CD8-positive, alpha-beta T cell (primary cell): ENCODE measurements at regions of chrX and their contacts with region 1.

Region 1: DNA sequence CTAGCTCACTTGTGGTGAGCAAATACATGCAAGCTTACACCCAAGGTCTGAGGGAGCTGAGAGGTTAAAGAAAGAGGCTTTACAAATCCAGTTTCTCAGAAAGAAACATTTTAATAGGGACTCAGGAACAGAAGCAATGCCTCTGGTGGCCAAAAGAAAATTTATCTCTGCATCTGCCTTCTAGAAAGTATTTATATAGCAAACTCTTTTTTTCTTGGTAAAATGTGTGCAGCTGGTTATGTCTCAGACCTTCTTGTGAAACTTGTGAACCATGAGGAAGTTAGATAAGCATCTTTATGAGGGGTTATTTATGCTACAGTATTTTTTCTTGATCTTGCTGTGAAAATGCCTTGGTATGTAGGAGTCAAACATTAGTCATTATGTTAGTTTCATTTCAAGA is 48.5 kb upstream of the CYSLTR1 start:
- DNase-seq: peak in 2 of 9 experiments; percentile 6 to 21
- ATAC-seq: peak; percentile 36
- H3K4me3 ChIP-seq: no peak overlapping the region
- H3K4me3 Mint-ChIP-seq: no peak overlapping the region
- H3K27ac ChIP-seq: no peak overlapping the region
- H3K27ac Mint-ChIP-seq: peak overlapping the region; percentile 27
- H3K4me1 ChIP-seq: no peaks in the 10 kb centered on the region
- H3K4me1 Mint-ChIP-seq: peaks cover 6% of the 10 kb centered on the region
- H3K27me3 ChIP-seq: no peaks in the 10 kb centered on the region
- H3K27me3 Mint-ChIP-seq: no peaks in the 10 kb centered on the region
- CTCF ChIP-seq: no peak

Region 2: GRCh38 chrX:78333521-78333920 is 42.4 kb before region 1 on chrX:
- CTCF ChIA-PET with region 1: no interaction called
- POLR2A ChIA-PET with region 1: no interaction called
- intact Hi-C with region 1: loop called in 1 of 2 experiments (anchors 5 kb)
- DNase-seq: peak in 2 of 9 experiments; percentile 54 to 74
- ATAC-seq: peak; percentile 82
- H3K4me3 ChIP-seq: no peak overlapping the region
- H3K4me3 Mint-ChIP-seq: no peak overlapping the region
- H3K27ac ChIP-seq: no peak overlapping the region
- H3K27ac Mint-ChIP-seq: no peak overlapping the region
- H3K4me1 ChIP-seq: peaks cover 25% of the 10 kb centered on the region
- H3K4me1 Mint-ChIP-seq: peaks cover 52% of the 10 kb centered on the region
- H3K27me3 ChIP-seq: no peaks in the 10 kb centered on the region
- H3K27me3 Mint-ChIP-seq: no peaks in the 10 kb centered on the region
- CTCF ChIP-seq: no peak